Head of caudate nucleus (tissue), 42 donors: ENCODE measurements at regions of chr3 and their contacts with region 1.

Region 1: DNA sequence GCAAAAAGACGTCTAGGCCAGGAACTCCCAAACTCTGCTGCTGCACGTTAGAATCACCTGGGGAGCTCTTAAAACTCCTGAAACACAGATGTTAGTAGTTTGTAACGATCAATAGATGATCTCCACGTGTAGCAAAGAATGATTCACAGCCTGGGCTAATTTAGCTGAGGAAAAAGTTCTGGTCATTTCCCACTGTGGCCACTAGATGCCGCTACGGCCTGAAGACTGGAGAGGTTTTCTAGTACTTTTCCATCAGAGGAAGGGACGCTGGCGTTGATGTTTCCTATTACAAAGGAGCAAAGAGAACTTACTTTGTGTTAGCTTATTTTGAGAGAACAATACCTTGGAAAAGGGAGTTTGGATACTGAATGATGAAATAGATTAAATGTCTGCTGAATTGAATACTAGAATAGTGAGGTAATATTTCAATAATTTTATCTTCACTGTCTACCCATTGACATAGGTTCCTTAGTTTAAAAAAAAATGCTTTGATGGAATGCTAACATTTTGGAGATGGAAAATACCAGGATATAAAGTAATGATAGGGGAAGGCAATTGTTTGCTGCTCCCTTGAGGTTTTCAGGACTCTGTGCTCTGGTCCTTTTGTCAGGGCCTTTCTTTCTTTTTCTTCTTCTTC is 159.1 kb downstream of the P3H2 start:
- DNase-seq: peak; percentile 45 to 95 (median 85)

Region 2: GRCh38 chr3:190089711-190090110 is 128.1 kb after region 1 on chr3:
- intact Hi-C with region 1: loop called (anchors 10 kb)
- DNase-seq: no peak

Region 3: GRCh38 chr3:190204200-190204599 is 242.6 kb after region 1 on chr3:
- intact Hi-C with region 1: loop called (anchors 5 kb)
- DNase-seq: no peak

Region 4: DNA sequence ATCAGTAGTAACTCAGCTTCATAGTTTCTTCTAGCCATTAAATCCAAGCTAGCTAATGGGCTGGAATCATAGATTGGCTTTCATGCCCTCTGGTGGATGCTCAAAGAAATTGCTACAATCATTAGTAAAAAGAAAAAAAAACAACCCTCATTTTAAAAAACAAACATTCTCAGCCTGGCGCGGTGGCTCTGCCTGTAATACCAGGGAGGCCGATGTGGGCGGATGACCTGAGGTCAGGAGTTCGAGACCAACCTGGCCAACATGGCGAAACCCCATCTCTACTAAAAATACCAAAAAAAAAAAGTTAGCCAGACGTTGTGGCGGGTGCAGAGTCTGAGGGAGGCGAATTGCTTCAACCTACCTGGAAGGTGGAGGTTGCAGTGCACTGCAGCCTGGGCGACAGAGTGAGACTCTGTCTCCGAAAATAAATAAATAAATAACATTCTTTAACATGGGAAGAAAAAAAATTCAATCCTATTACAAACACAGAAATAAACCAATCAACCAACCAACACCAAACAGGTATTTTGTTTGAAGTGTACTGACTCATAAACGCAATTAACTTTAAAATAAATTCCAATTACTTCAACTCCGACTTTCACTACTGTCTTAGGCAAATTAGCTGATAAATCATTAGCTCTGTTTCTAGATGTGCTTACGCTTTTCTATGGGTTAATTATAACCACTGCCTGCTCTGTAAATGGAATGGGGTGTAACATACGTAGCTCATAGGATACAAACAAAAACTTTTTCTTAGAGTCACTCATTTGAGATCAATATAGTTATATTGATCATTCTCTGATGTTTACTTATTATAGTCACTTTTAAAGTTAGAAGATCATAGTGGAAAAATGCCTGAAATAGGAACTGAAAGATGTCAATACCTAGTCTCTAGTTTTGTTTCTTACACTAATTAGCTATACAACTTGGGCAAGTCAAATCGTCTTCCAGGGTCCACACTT is 463.1 kb after region 1 on chr3:
- intact Hi-C with region 1: loop called (anchors 10 kb)
- DNase-seq: peak; percentile 7 to 70 (median 33)